PC-3 (cell line): ENCODE measurements at regions of chr10 and their contacts with region 1.

Region 1: GRCh38 chr10:63003816-63004453 is 129.2 kb upstream of the NRBF2 start:
- DNase-seq: peak; percentile 87
- ATAC-seq: peak; percentile 39
- H3K4me3 ChIP-seq: no peak overlapping the region
- H3K27ac ChIP-seq: no peak overlapping the region
- H3K4me1 ChIP-seq: peaks cover 16% of the 10 kb centered on the region
- H3K27me3 ChIP-seq: no peaks in the 10 kb centered on the region
- CTCF ChIP-seq: peak; percentile 99

Region 2: GRCh38 chr10:62594093-62594520 is 409.8 kb before region 1 on chr10:
- CTCF ChIA-PET with region 1: no interaction called
- POLR2A ChIA-PET with region 1: interaction called, 5 read pairs
- intact Hi-C with region 1: loop called (anchors 1 kb)
- DNase-seq: peak; percentile 98
- ATAC-seq: peak; percentile 86
- H3K4me3 ChIP-seq: no peak overlapping the region
- H3K27ac ChIP-seq: no peak overlapping the region
- H3K4me1 ChIP-seq: peaks cover 11% of the 10 kb centered on the region
- H3K27me3 ChIP-seq: no peaks in the 10 kb centered on the region
- CTCF ChIP-seq: peak; percentile 100

Region 3: GRCh38 chr10:62885684-62886467 is 118.1 kb before region 1 on chr10:
- CTCF ChIA-PET with region 1: no interaction called
- POLR2A ChIA-PET with region 1: interaction called, 10 read pairs
- intact Hi-C with region 1: no loop called
- DNase-seq: peak; percentile 100
- ATAC-seq: peak; percentile 97
- H3K4me3 ChIP-seq: peak overlapping the region; percentile 16
- H3K27ac ChIP-seq: peak overlapping the region; percentile 74
- H3K4me1 ChIP-seq: peaks cover 36% of the 10 kb centered on the region
- H3K27me3 ChIP-seq: no peaks in the 10 kb centered on the region
- CTCF ChIP-seq: no peak

Region 4: GRCh38 chr10:62980687-62981086 is 23.2 kb before region 1 on chr10:
- CTCF ChIA-PET with region 1: no interaction called
- POLR2A ChIA-PET with region 1: no interaction called
- intact Hi-C with region 1: loop called (anchors 1 kb)
- DNase-seq: peak; percentile 99
- ATAC-seq: peak; percentile 98
- H3K4me3 ChIP-seq: no peak overlapping the region
- H3K27ac ChIP-seq: peak overlapping the region; percentile 44
- H3K4me1 ChIP-seq: peaks cover 32% of the 10 kb centered on the region
- H3K27me3 ChIP-seq: no peaks in the 10 kb centered on the region
- CTCF ChIP-seq: no peak

Region 5: GRCh38 chr10:63042256-63042655 is 38.3 kb after region 1 on chr10:
- CTCF ChIA-PET with region 1: no interaction called
- POLR2A ChIA-PET with region 1: no interaction called
- intact Hi-C with region 1: no loop called
- DNase-seq: no peak
- ATAC-seq: no peak
- H3K4me3 ChIP-seq: no peak overlapping the region
- H3K27ac ChIP-seq: no peak overlapping the region
- H3K4me1 ChIP-seq: no peaks in the 10 kb centered on the region
- H3K27me3 ChIP-seq: no peaks in the 10 kb centered on the region
- CTCF ChIP-seq: no peak

Region 6: DNA sequence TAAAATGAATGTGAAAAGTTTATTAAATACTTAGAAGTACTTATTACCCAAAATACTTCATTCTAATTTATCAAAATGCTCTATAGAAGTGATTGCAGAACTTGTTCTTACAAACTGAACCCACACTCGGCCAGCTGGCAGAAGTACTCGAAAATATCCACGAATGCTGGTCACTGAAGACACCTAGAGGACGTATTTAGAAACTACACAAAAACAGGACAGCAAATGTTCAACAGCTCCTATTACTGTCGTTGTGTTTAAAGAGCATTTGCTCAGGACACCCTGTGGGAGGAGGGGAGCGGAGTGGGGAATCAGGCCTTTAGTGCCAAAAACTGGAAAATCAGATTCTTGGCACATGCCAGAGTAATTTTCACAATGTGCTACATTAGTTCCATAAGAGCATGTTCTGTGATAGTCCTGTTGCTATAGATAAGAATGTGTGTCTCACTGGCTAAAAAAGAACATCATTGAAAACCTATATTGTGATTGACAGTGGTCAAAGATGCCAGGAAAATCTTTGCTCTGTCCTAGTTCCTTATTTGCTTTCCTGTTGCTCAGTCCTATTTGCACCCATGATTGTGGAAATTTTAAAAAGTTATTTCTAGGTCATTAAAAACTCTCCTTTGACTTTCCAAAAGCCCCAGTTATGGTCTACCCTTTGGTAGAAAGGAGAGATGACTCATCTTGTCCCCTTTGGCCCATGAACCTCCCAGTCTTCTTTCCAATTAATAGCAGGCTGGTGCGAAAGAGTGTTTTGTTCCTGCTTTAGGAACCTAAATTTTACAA is 80.2 kb after region 1 on chr10:
- CTCF ChIA-PET with region 1: interaction called, 9 read pairs
- POLR2A ChIA-PET with region 1: interaction called, 4 read pairs
- intact Hi-C with region 1: loop called (anchors 1 kb)
- DNase-seq: peak; percentile 99
- ATAC-seq: peak; percentile 95
- H3K4me3 ChIP-seq: no peak overlapping the region
- H3K27ac ChIP-seq: no peak overlapping the region
- H3K4me1 ChIP-seq: peaks cover 14% of the 10 kb centered on the region
- H3K27me3 ChIP-seq: no peaks in the 10 kb centered on the region
- CTCF ChIP-seq: peak; percentile 100